B cell (primary cell): ENCODE measurements at regions of chr3 and their contacts with region 1.

Region 1: GRCh38 chr3:42547401-42547945 is 34.3 kb downstream of the SEC22C start:
- DNase-seq: peak; percentile 74
- ATAC-seq: peak; percentile 53
- H3K4me3 ChIP-seq: no peak overlapping the region
- H3K4me3 Mint-ChIP-seq: no peak overlapping the region
- H3K27ac ChIP-seq: no peak overlapping the region
- H3K27ac Mint-ChIP-seq: no peak overlapping the region
- H3K4me1 ChIP-seq: no peaks in the 10 kb centered on the region
- H3K4me1 Mint-ChIP-seq: no peaks in the 10 kb centered on the region
- H3K27me3 ChIP-seq: no peaks in the 10 kb centered on the region
- H3K27me3 Mint-ChIP-seq: no peaks in the 10 kb centered on the region
- CTCF ChIP-seq: peak; percentile 97

Region 2: DNA sequence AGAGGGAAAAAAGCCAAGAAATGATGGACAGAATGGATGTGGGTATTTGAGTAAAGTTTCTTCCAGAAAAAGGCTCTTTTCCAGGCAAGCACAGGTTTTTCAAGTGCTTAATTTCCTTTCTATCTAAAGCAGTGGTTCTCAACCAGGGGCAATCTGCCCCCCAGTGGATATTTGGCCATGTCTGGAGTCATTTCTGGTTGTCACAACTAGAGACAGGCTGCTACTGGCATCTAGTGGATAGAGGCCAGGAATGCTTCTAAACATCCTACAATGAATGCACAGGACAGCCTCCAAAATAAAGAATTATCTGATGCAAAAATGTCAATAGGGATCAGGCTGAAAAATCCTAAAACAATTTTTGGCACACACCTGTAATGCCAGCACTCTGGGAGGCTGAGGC is 10.4 kb after region 1 on chr3:
- CTCF ChIA-PET with region 1: interaction called, 10 read pairs
- POLR2A ChIA-PET with region 1: no interaction called
- intact Hi-C with region 1: no loop called
- DNase-seq: no peak
- ATAC-seq: no peak
- H3K4me3 ChIP-seq: no peak overlapping the region
- H3K4me3 Mint-ChIP-seq: no peak overlapping the region
- H3K27ac ChIP-seq: no peak overlapping the region
- H3K27ac Mint-ChIP-seq: no peak overlapping the region
- H3K4me1 ChIP-seq: no peaks in the 10 kb centered on the region
- H3K4me1 Mint-ChIP-seq: no peaks in the 10 kb centered on the region
- H3K27me3 ChIP-seq: no peaks in the 10 kb centered on the region
- H3K27me3 Mint-ChIP-seq: no peaks in the 10 kb centered on the region
- CTCF ChIP-seq: no peak